ENCODE measurements at regions of chr1 and their contacts with region 1.

Region 1: DNA sequence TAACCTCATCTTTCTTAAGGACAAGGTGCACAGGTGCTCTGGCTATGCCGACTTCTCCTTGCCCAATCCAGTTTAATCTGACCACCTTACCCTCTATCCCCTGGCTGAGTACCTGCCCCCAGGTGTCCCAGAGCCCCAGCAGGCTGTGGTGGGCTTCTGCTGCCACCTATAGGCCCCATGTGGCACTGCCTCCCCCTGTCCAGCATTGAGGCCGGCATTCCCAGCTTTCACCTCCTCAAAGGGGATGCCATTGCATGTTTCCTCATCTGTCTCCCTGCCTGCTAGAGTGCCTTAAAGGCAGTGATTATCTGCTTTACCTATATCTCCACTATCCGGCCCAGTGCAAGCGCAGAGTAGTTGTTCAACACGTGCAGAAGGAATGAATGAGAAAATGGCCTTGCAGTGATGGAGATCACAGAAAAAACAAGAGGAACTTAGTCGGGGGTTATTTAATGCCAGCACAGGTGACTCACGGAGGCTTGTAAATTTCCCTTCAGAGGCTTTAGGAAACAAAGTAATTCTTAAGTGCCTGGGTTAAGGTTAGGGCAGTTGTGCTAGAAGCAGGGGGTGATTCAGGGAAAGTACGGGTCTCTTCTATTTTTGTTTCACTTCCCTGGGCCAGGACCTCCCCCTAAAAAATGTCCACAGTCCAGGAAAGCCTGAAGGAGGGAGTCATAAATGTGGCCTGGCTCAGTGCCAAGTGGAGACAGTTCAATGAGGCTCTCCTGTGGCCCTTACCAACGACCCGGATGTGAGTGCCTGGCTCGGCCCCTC is 131.8 kb upstream of the NGF start:
- DNase-seq: peak; percentile 67
- H3K4me3 ChIP-seq: no peak overlapping the region
- H3K27ac ChIP-seq: no peak overlapping the region
- H3K4me1 ChIP-seq: no peaks in the 10 kb centered on the region
- H3K27me3 ChIP-seq: no peaks in the 10 kb centered on the region
- CTCF ChIP-seq: peak; percentile 88

Region 2: GRCh38 chr1:115138968-115139367 is 330.9 kb before region 1 on chr1:
- intact Hi-C with region 1: loop called (anchors 2 kb)
- DNase-seq: peak; percentile 81
- H3K4me3 ChIP-seq: no peak overlapping the region
- H3K27ac ChIP-seq: no peak overlapping the region
- H3K4me1 ChIP-seq: no peaks in the 10 kb centered on the region
- H3K27me3 ChIP-seq: no peaks in the 10 kb centered on the region
- CTCF ChIP-seq: peak; percentile 81

Region 3: GRCh38 chr1:115275212-115275611 is 194.7 kb before region 1 on chr1:
- intact Hi-C with region 1: loop called (anchors 10 kb)
- DNase-seq: no peak
- H3K4me3 ChIP-seq: no peak overlapping the region
- H3K27ac ChIP-seq: no peak overlapping the region
- H3K4me1 ChIP-seq: no peaks in the 10 kb centered on the region
- H3K27me3 ChIP-seq: no peaks in the 10 kb centered on the region
- CTCF ChIP-seq: peak; percentile 25

Region 4: GRCh38 chr1:115595279-115596079 is 125.6 kb after region 1 on chr1:
- intact Hi-C with region 1: loop called (anchors 5 kb)
- DNase-seq: peak; percentile 82
- H3K4me3 ChIP-seq: no peak overlapping the region
- H3K27ac ChIP-seq: no peak overlapping the region
- H3K4me1 ChIP-seq: no peaks in the 10 kb centered on the region
- H3K27me3 ChIP-seq: no peaks in the 10 kb centered on the region
- CTCF ChIP-seq: peak; percentile 89

Measured in colonic mucosa (tissue), 4 donors.